ENCODE measurements at regions of chrX and their contacts with region 1.

Region 1: DNA sequence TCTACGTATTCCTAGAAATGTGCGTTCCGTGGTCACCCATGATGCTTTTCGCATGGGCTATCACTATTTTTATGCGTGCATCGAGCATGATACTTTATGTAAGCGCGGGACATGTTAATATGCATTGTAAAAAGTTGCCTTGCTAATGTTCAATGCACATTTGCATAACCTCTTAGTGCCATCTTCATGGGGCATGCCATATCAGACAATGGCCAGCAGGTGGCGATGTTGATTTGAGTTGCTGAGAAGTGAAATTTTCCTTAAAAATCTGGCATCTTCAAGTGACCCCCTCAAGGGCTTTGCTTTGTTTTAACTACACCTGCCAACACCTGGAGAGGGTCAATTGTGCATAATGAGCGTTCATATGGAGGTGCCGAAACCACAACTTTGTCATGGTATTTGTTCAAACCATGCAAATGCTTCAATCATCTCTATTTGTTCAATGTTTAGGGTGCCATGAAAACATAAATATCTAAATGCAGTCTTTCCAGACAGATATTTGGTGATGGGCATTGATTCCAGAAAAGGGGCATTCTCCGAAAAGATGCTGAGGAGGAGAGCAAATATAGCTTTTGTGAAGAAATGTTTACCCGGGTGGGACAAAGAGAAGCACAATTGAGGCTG is 833.9 kb upstream of the PRKX start:
- DNase-seq: peak; percentile 58
- ATAC-seq: no peak
- H3K4me3 Mint-ChIP-seq: no peak overlapping the region
- H3K27ac Mint-ChIP-seq: no peak overlapping the region
- H3K4me1 Mint-ChIP-seq: no peaks in the 10 kb centered on the region
- H3K27me3 Mint-ChIP-seq: no peaks in the 10 kb centered on the region

Region 2: GRCh38 chrX:3962511-3963311 is 584.6 kb before region 1 on chrX:
- CTCF ChIA-PET with region 1: interaction called, 3 read pairs
- POLR2A ChIA-PET with region 1: no interaction called
- intact Hi-C with region 1: loop called in 1 of 2 experiments (anchors 2 kb)
- DNase-seq: peak; percentile 5
- ATAC-seq: no peak
- H3K4me3 Mint-ChIP-seq: no peak overlapping the region
- H3K27ac Mint-ChIP-seq: no peak overlapping the region
- H3K4me1 Mint-ChIP-seq: peaks cover 5% of the 10 kb centered on the region
- H3K27me3 Mint-ChIP-seq: peaks cover 5% of the 10 kb centered on the region

Region 3: DNA sequence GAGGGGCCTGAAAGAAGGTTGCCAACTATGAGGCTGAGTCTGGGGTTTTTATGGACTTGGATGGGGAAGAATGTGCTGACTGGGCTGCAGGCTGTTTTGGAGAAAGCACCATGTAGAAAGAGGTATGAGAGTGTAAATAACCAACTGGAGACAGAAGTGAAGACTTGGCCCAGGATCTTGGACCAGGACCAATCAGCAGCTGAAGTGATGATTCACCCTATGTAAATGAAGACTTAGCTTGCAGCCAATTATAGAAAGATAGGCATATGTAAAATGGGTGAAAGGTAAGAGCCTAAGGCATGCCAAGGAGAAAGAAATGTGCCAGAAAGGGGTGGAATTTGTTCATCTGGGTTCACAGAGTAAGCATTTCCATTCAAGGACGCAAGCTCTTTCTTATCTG is 22.8 kb after region 1 on chrX:
- CTCF ChIA-PET with region 1: no interaction called
- POLR2A ChIA-PET with region 1: no interaction called
- intact Hi-C with region 1: no loop called
- DNase-seq: no peak
- ATAC-seq: no peak
- H3K4me3 Mint-ChIP-seq: no peak overlapping the region
- H3K27ac Mint-ChIP-seq: no peak overlapping the region
- H3K4me1 Mint-ChIP-seq: no peaks in the 10 kb centered on the region
- H3K27me3 Mint-ChIP-seq: no peaks in the 10 kb centered on the region

Region 4: DNA sequence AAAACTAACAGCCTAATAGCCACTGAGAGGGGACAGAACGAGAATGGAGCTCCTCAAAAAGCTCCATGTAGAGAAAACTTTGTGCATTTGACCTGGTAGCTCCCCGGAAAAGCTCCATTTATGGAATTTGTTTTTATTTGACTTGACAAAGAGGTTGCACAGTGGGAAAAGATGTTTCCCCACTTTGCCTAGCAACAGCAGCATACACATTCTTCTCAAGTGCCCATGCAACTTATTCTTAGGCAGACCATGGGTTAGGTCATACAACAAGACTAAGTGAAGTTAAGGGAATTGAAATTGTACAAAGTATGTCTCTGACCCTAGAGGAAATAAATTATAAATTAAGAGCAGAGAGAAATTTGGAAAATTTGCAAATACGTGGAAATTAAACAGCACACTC is 115.8 kb after region 1 on chrX:
- CTCF ChIA-PET with region 1: no interaction called
- POLR2A ChIA-PET with region 1: no interaction called
- intact Hi-C with region 1: no loop called
- DNase-seq: no peak
- ATAC-seq: no peak
- H3K4me3 Mint-ChIP-seq: no peak overlapping the region
- H3K27ac Mint-ChIP-seq: no peak overlapping the region
- H3K4me1 Mint-ChIP-seq: no peaks in the 10 kb centered on the region
- H3K27me3 Mint-ChIP-seq: no peaks in the 10 kb centered on the region

Region 5: GRCh38 chrX:5113128-5113527 is 565.8 kb after region 1 on chrX:
- CTCF ChIA-PET with region 1: no interaction called
- POLR2A ChIA-PET with region 1: no interaction called
- intact Hi-C with region 1: loop called (anchors 2 to 10 kb)
- DNase-seq: no peak
- ATAC-seq: no peak
- H3K4me3 Mint-ChIP-seq: no peak overlapping the region
- H3K27ac Mint-ChIP-seq: no peak overlapping the region
- H3K4me1 Mint-ChIP-seq: no peaks in the 10 kb centered on the region
- H3K27me3 Mint-ChIP-seq: no peaks in the 10 kb centered on the region

Region 6: DNA sequence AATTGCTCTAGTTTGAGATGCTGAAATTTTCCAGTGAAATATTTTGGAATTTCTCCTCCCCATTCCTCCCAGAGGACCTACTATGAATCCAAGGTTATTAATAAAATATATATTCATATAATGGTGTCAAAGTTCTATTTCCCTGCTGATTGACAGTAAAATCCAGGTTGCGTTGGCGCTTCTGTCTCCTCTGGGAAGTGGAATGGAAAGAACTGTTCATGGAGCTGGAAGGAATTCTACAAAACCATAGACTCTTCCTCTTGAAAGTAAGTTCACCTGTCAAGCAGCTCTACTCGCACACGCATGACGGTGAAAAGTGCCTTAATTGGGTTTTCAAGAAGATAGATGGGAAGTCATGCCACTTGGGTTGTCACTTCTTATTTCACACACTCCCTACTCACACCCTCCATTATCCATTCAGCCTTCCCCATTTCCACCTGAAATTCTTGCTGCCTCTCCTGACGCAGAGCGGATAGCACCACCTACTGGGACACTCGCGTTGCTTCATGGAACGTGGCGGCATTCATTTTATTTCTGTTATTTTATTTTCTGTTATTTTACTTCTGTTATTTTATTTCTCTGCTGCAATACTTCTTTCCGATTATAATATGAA is 1329.8 kb after region 1 on chrX:
- CTCF ChIA-PET with region 1: no interaction called
- POLR2A ChIA-PET with region 1: no interaction called
- intact Hi-C with region 1: loop called in 1 of 2 experiments (anchors 5 kb)
- DNase-seq: peak; percentile 5
- ATAC-seq: no peak
- H3K4me3 Mint-ChIP-seq: no peak overlapping the region
- H3K27ac Mint-ChIP-seq: no peak overlapping the region
- H3K4me1 Mint-ChIP-seq: no peaks in the 10 kb centered on the region
- H3K27me3 Mint-ChIP-seq: no peaks in the 10 kb centered on the region